Panc1 (cell line): ENCODE measurements at regions of chr10 and their contacts with region 1.

Region 1: GRCh38 chr10:6401562-6402348 is 178.3 kb downstream of the PRKCQ start:
- DNase-seq: peak; percentile 75
- ATAC-seq: peak; percentile 98
- H3K4me3 ChIP-seq: peak overlapping the region; percentile 36 to 60
- H3K27ac ChIP-seq: peak overlapping the region; percentile 72
- H3K4me1 ChIP-seq: peaks cover 3% of the 10 kb centered on the region; the same call in 1 of the 2 replicates
- H3K27me3 ChIP-seq: peaks cover 2% of the 10 kb centered on the region; the same call in 1 of the 2 replicates
- CTCF ChIP-seq: peak; percentile 73

Region 2: GRCh38 chr10:6108603-6109443 is 292.9 kb before region 1 on chr10:
- CTCF ChIA-PET with region 1: interaction called, 5 read pairs
- POLR2A ChIA-PET with region 1: no interaction called
- in situ Hi-C with region 1: no loop called
- intact Hi-C with region 1: loop called (anchors 2 kb)
- DNase-seq: peak; percentile 20
- ATAC-seq: no peak
- H3K4me3 ChIP-seq: no peak overlapping the region
- H3K27ac ChIP-seq: no peak overlapping the region
- H3K4me1 ChIP-seq: no peaks in the 10 kb centered on the region
- H3K27me3 ChIP-seq: no peaks in the 10 kb centered on the region
- CTCF ChIP-seq: peak; percentile 76

Region 3: GRCh38 chr10:6124666-6125065 is 277.1 kb before region 1 on chr10:
- CTCF ChIA-PET with region 1: no interaction called
- POLR2A ChIA-PET with region 1: interaction called, 10 read pairs
- in situ Hi-C with region 1: no loop called
- intact Hi-C with region 1: no loop called
- DNase-seq: no peak
- ATAC-seq: no peak
- H3K4me3 ChIP-seq: no peak overlapping the region
- H3K27ac ChIP-seq: no peak overlapping the region
- H3K4me1 ChIP-seq: no peaks in the 10 kb centered on the region
- H3K27me3 ChIP-seq: no peaks in the 10 kb centered on the region
- CTCF ChIP-seq: no peak

Region 4: DNA sequence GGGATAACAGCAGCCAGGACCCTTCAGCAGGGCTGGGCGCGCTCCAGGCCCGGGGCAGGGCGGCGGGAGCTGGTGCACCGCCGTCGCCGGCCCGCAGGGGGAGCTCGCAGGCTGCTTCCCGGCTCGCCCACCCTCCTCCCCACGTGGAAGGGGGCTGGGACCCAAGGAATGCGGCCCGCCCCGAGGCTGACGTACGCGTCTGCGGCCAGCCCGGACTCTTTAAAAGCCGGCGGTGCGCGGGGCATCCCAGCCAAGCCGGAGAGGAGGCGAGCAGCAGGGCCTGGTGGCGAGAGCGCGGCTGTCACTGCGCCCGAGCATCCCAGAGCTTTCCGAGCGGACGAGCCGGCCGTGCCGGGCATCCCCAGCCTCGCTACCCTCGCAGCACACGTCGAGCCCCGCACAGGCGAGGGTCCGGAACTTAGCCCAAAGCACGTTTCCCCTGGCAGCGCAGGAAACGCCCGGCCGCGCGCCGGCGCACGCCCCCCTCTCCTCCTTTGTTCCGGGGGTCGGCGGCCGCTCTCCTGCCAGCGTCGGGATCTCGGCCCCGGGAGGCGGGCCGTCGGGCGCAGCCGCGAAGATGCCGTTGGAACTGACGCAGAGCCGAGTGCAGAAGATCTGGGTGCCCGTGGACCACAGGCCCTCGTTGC is 198.9 kb before region 1 on chr10 and contains the start of gene PFKFB3:
- CTCF ChIA-PET with region 1: interaction called, 46 read pairs
- POLR2A ChIA-PET with region 1: interaction called, 6 read pairs
- in situ Hi-C with region 1: no loop called
- intact Hi-C with region 1: loop called (anchors 2 kb)
- DNase-seq: peak; percentile 30
- ATAC-seq: peak; percentile 90
- H3K4me3 ChIP-seq: peak within 1 kb of the TSS; percentile 66 to 68
- H3K27ac ChIP-seq: peak within 1 kb of the TSS; percentile 51; the same call in 1 of the 2 replicates
- H3K4me1 ChIP-seq: peaks cover 12% of the 10 kb centered on the region
- H3K27me3 ChIP-seq: no peaks in the 10 kb centered on the region
- CTCF ChIP-seq: peak; percentile 87
- total RNA-seq, gene PFKFB3: 17.1 TPM

Region 5: GRCh38 chr10:6228010-6228511 is 173.7 kb before region 1 on chr10:
- CTCF ChIA-PET with region 1: no interaction called
- POLR2A ChIA-PET with region 1: no interaction called
- in situ Hi-C with region 1: no loop called
- intact Hi-C with region 1: no loop called
- DNase-seq: no peak
- ATAC-seq: no peak
- H3K4me3 ChIP-seq: no peak overlapping the region
- H3K27ac ChIP-seq: no peak overlapping the region
- H3K4me1 ChIP-seq: no peaks in the 10 kb centered on the region
- H3K27me3 ChIP-seq: no peaks in the 10 kb centered on the region
- CTCF ChIP-seq: no peak